Heart right ventricle (tissue), 16 donors: ENCODE measurements at regions of chr2 and their contacts with region 1.

Region 1: DNA sequence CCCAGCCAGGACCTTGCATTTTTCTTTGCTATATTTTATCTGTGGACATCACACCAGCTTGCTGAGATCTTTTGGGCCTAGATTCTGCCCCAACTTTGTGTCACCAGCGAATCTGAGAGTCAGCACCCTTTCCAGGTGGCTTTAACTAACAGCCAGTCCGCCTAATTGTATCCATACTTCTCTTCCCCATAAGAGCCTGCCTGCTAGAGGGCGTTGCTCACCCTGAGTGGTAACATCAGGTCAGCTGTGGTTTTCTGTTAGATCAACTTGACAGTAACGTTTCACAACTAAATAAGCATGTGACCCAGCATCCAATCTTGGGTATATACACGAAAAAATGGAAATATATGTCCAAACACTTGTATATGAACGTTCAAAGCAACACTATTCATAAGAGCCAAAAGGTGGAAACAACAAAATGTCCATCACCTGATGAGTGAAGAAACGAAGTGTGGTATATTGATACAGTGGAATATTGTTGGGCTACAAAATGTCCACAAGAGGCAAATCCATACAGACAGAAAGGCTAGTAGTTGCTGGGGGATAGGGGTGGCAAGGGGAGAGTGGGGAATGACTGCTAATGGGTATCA is 24.9 kb downstream of the EFHD1 start:
- DNase-seq: no peak
- ATAC-seq: peak in 2 of 8 donors; percentile 52 to 64
- H3K4me3 ChIP-seq: no peak overlapping the region
- H3K27ac ChIP-seq: no peak overlapping the region
- H3K4me1 ChIP-seq: peaks cover 0 to 17% (median 10%) of the 10 kb centered on the region in 9 donors
- H3K27me3 ChIP-seq: no peaks in the 10 kb centered on the region
- CTCF ChIP-seq: peak in 3 of 9 donors; percentile 13 to 32 (median 13)

Region 2: DNA sequence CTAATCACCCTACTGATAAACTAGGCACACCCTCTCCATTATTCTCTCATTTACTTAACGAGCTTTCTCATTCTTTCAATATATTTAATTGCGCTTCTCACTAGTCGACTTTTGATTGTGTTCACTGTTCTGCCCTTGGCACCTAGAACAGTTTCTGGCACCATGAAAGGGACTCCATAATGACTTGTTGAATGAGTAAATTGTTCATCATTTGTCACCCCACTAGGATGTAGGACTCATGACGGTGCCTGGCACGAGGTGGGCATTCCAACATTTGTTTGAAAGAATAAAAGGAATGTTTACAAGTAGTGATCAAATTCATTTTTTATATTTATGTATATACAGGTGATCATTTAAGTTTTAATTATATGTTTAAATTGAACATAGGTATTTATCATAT is 573.1 kb before region 1 on chr2:
- intact Hi-C with region 1: no loop called
- DNase-seq: no peak
- ATAC-seq: no peak
- H3K4me3 ChIP-seq: no peak overlapping the region
- H3K27ac ChIP-seq: no peak overlapping the region
- H3K4me1 ChIP-seq: peaks cover 0 to 13% (median 4%) of the 10 kb centered on the region in 9 donors
- H3K27me3 ChIP-seq: no peaks in the 10 kb centered on the region
- CTCF ChIP-seq: no peak

Region 3: DNA sequence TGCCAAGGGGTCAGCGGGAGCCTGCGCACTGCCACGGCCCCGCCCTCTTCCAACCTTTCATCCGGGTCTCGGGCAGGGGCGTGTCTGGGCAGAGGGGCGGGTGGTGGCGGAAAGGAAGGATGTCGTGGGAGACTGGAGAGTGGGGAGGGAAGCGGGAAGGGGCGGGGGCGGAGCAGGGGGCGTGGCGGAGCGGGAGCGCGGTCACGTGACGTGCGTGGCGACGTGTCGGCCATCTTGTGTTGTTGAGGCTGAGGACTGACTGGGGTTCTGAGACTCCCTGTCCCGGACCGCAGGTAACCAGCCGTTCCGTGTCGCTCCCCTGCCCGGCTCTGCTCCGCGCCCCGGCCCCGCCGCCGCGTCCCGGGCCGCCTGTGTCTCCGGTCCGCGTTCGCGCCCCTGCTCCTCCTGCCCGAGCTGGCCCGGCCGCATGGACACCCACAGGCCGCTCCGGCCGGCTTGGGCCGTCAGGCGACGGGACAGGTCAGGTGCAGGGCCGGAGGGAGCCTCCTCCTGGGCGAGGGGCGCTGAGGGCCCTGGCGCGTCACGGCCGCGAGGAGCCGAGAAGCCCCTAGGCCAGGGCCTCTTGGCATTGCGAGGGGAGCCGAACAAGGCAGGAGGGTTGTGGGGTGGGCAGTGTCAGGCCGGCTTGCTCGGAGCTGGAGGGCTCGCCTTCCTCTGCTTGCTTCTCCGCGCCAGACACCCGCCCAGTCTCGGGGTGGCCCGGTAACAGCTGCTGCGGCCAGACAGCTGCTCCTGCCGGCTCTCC is 39.0 kb after region 1 on chr2 and contains the start of gene GIGYF2:
- intact Hi-C with region 1: loop called in 1 of 10 experiments (anchors 1 kb)
- DNase-seq: peak; percentile 98
- ATAC-seq: peak; percentile 97 to 99 (median 99)
- H3K4me3 ChIP-seq: peak within 1 kb of the TSS; percentile 67 to 99 (median 93)
- H3K27ac ChIP-seq: peak within 1 kb of the TSS; percentile 69 to 97 (median 93)
- H3K4me1 ChIP-seq: peaks cover 9 to 50% (median 36%) of the 10 kb centered on the region in 9 donors
- H3K27me3 ChIP-seq: no peaks in the 10 kb centered on the region
- CTCF ChIP-seq: no peak
- total RNA-seq, gene GIGYF2: 54.9 to 71.7 (median 66.5) TPM

Region 4: GRCh38 chr2:232860593-232861241 is 202.4 kb after region 1 on chr2:
- intact Hi-C with region 1: no loop called
- DNase-seq: no peak
- ATAC-seq: no peak
- H3K4me3 ChIP-seq: no peak overlapping the region
- H3K27ac ChIP-seq: no peak overlapping the region
- H3K4me1 ChIP-seq: no peaks in the 10 kb centered on the region
- H3K27me3 ChIP-seq: no peaks in the 10 kb centered on the region
- CTCF ChIP-seq: no peak